ENCODE measurements at regions of chr18 and their contacts with region 1.

Region 1: GRCh38 chr18:23828426-23828825 is 139.2 kb downstream of the LAMA3 start:
- DNase-seq: peak; percentile 93
- H3K4me3 ChIP-seq: peak overlapping the region in 1 of 3 experiments; percentile 36
- H3K27ac ChIP-seq: peak overlapping the region; percentile 100
- H3K4me1 ChIP-seq: peaks cover 55% of the 10 kb centered on the region
- H3K27me3 ChIP-seq: no peaks in the 10 kb centered on the region
- CTCF ChIP-seq: no peak

Region 2: DNA sequence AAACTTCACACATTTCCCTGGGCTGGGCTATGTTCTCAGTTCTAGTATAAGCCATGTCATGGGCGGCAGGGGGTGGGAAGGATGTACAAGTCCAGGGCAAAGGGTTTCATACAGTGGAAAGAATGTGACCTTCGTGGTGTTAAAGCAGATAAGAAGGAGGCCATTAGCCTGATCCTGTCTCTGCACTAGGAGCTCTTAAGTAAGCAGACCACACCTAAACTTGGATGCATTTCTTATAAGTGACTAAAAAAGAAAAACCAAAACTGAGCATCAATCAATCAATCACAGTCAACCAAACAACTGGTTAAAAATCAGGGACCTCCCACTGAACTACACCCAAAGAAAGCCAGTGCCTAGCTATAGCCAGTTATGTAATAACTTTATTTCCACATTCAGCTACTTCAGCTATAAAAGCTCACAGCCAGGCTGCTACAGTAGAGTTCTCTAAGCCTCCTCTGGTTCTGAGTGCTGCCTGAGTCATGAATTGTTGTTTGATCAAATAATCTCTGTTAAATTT is 422.1 kb before region 1 on chr18:
- CTCF ChIA-PET with region 1: no interaction called
- dilution Hi-C with region 1: no loop called
- in situ Hi-C with region 1: no loop called
- intact Hi-C with region 1: no loop called
- DNase-seq: peak; percentile 9
- H3K4me3 ChIP-seq: no peak overlapping the region
- H3K27ac ChIP-seq: no peak overlapping the region
- H3K4me1 ChIP-seq: no peaks in the 10 kb centered on the region
- H3K27me3 ChIP-seq: no peaks in the 10 kb centered on the region
- CTCF ChIP-seq: no peak

Region 3: DNA sequence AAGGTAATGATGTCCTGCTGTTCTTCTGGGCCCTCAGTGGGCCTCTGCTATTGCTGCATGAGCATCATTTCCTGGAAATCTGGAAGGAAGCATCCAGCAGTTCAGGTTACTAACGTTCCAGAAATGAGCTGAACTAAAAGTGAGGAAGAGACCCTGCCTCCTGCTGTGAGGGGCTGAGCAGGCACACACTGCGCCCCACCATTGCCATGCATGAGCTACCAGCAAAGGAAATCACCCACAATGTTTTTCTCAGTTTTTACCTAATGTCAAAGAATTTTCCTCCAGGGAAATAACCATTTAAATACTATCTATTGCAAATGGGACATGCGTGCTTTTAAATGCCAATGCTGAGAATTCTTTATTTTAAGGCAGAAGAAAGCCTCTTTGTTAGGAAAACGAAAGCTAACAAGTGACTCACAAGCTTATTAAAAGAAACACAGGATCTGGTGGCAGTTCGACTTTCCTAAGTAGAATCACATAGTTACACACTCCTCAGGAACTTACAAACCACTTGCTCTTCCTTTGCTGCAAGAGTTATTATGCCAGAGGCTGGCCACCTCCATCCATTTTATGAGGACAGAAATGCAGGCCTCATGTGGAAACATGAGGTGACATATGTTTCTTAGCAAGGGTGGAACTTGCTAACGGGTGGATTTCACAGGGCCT is 33.5 kb after region 1 on chr18:
- CTCF ChIA-PET with region 1: interaction called, 5 read pairs
- dilution Hi-C with region 1: loop called (anchors 5 kb)
- in situ Hi-C with region 1: no loop called
- intact Hi-C with region 1: loop called (anchors 1 kb)
- DNase-seq: peak; percentile 94
- H3K4me3 ChIP-seq: no peak overlapping the region
- H3K27ac ChIP-seq: peak overlapping the region; percentile 90
- H3K4me1 ChIP-seq: peaks cover 39% of the 10 kb centered on the region
- H3K27me3 ChIP-seq: no peaks in the 10 kb centered on the region
- CTCF ChIP-seq: no peak

Region 4: GRCh38 chr18:23883277-23883790 is 54.9 kb after region 1 on chr18:
- CTCF ChIA-PET with region 1: no interaction called
- dilution Hi-C with region 1: loop called (anchors 10 kb)
- in situ Hi-C with region 1: no loop called
- intact Hi-C with region 1: no loop called
- DNase-seq: peak; percentile 85
- H3K4me3 ChIP-seq: no peak overlapping the region
- H3K27ac ChIP-seq: peak overlapping the region; percentile 73
- H3K4me1 ChIP-seq: peaks cover 77% of the 10 kb centered on the region
- H3K27me3 ChIP-seq: no peaks in the 10 kb centered on the region
- CTCF ChIP-seq: no peak

Measured in mammary epithelial cell (primary cell).